Activated CD8-positive, alpha-beta T cell treated with anti-CD3 and anti-CD28 coated beads for 36 hours (primary cell): ENCODE measurements at regions of chr3 and their contacts with region 1.

Region 1: DNA sequence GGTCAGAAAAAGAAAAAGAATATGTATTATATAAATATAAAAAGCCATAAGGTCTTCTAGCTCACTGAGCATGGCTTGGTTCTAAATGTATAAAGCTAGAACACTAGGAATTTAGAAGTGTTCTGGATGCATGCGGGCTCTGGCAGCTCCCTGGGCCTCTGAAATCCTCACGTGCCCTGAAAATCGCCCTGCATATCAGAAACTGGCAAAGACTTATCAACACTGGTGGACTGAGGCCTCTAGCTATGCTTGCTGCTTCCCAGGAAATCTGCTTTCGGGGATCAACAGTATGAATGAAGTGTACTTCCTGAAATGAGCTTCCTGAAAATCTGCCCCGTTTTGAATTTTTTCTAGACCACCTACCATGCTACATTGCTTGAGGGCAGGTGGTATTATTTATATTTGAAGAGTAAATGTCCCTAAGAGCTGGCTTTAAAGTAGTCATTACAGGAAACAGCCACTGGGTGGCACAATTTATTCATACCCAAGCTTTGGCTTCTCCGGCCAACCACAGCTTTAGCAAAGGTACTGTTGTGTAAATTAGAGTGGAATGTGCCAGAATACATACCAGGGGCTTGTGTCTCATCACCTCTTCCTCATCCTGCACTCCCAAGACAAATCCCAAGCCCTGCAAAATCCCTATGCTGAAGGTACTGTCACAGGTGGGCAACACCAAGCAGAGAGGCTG is 17.7 kb downstream of the CRTAP start:
- DNase-seq: peak; percentile 50
- ATAC-seq: peak; percentile 80
- H3K4me3 Mint-ChIP-seq: no peak overlapping the region
- H3K27ac Mint-ChIP-seq: no peak overlapping the region
- H3K4me1 Mint-ChIP-seq: no peaks in the 10 kb centered on the region
- H3K27me3 Mint-ChIP-seq: no peaks in the 10 kb centered on the region
- CTCF ChIP-seq: peak; percentile 84

Region 2: DNA sequence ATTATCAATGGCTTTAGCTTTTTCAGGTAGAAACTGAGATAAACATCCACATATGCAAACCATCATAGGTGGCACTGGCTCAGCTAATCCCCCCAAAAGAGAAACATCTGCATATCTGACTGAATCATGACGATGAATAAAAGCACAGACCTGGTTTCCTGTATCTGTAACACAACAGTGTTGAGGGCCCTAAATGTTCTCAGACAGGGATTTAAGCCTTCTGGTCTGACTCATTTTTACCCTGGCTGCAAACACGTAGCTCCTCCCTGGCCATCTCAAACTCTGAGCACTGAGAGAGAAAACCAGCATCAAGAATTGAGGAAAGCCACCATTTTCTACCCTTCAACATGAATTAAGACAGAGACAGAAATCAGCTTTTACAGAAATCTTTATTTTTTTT is 69.7 kb before region 1 on chr3:
- CTCF ChIA-PET with region 1: no interaction called
- POLR2A ChIA-PET with region 1: no interaction called
- intact Hi-C with region 1: no loop called
- DNase-seq: peak; percentile 70
- ATAC-seq: peak; percentile 80
- H3K4me3 Mint-ChIP-seq: peak overlapping the region; percentile 6
- H3K27ac Mint-ChIP-seq: peak overlapping the region; percentile 93
- H3K4me1 Mint-ChIP-seq: peaks cover 58% of the 10 kb centered on the region
- H3K27me3 Mint-ChIP-seq: no peaks in the 10 kb centered on the region
- CTCF ChIP-seq: no peak

Region 3: GRCh38 chr3:33096093-33096868 is 35.2 kb before region 1 on chr3:
- CTCF ChIA-PET with region 1: interaction called, 10 read pairs
- POLR2A ChIA-PET with region 1: no interaction called
- intact Hi-C with region 1: no loop called
- DNase-seq: peak; percentile 64
- ATAC-seq: peak; percentile 41
- H3K4me3 Mint-ChIP-seq: peak overlapping the region; percentile 97
- H3K27ac Mint-ChIP-seq: peak overlapping the region; percentile 87
- H3K4me1 Mint-ChIP-seq: peaks cover 33% of the 10 kb centered on the region
- H3K27me3 Mint-ChIP-seq: peaks cover 1% of the 10 kb centered on the region
- CTCF ChIP-seq: no peak

Region 4: GRCh38 chr3:33113772-33114621 is 17.5 kb before region 1 on chr3 and contains the start of gene CRTAP:
- CTCF ChIA-PET with region 1: interaction called, 15 read pairs
- POLR2A ChIA-PET with region 1: no interaction called
- intact Hi-C with region 1: no loop called
- DNase-seq: peak; percentile 92
- ATAC-seq: peak; percentile 92
- H3K4me3 Mint-ChIP-seq: peak within 1 kb of the TSS; percentile 79
- H3K27ac Mint-ChIP-seq: peak within 1 kb of the TSS; percentile 69
- H3K4me1 Mint-ChIP-seq: peaks cover 34% of the 10 kb centered on the region
- H3K27me3 Mint-ChIP-seq: no peaks in the 10 kb centered on the region
- CTCF ChIP-seq: no peak
- total RNA-seq, gene CRTAP: 32.7 to 35.7 TPM

Region 5: DNA sequence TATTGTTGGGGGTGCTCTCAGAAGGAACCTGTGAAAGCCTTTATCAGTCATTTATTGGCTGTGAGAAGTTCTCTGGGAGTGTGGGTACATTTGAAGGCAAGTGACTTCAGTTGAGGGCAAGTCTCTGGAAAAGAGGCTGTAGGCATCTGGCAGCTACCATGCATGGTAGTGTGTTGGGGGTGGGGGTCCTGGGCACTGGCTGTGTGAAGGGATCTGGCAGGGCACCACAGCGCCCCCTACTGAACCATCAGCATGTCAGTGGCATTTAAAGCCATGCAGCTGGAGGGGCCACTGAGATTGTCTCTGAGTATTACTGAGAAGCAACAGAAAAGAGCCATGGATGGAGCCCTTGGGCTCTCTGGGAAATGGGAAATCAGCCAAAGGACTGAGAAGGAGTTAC is 13.0 kb after region 1 on chr3:
- CTCF ChIA-PET with region 1: interaction called, 34 read pairs
- POLR2A ChIA-PET with region 1: no interaction called
- intact Hi-C with region 1: no loop called
- DNase-seq: peak; percentile 54
- ATAC-seq: peak; percentile 45
- H3K4me3 Mint-ChIP-seq: no peak overlapping the region
- H3K27ac Mint-ChIP-seq: no peak overlapping the region
- H3K4me1 Mint-ChIP-seq: no peaks in the 10 kb centered on the region
- H3K27me3 Mint-ChIP-seq: no peaks in the 10 kb centered on the region
- CTCF ChIP-seq: peak; percentile 50

Region 6: GRCh38 chr3:33547101-33547500 is 415.6 kb after region 1 on chr3:
- CTCF ChIA-PET with region 1: no interaction called
- POLR2A ChIA-PET with region 1: no interaction called
- intact Hi-C with region 1: no loop called
- DNase-seq: no peak
- ATAC-seq: no peak
- H3K4me3 Mint-ChIP-seq: no peak overlapping the region
- H3K27ac Mint-ChIP-seq: no peak overlapping the region
- H3K4me1 Mint-ChIP-seq: no peaks in the 10 kb centered on the region
- H3K27me3 Mint-ChIP-seq: no peaks in the 10 kb centered on the region
- CTCF ChIP-seq: no peak